ENCODE measurements at regions of chr12 and their contacts with region 1.

Region 1: GRCh38 chr12:11981121-11981733 is 89.5 kb upstream of the BCL2L14 start:
- DNase-seq: peak; percentile 60
- H3K4me3 Mint-ChIP-seq: peak overlapping the region; percentile 33
- H3K27ac Mint-ChIP-seq: peak overlapping the region; percentile 98
- H3K4me1 Mint-ChIP-seq: peaks cover 63% of the 10 kb centered on the region
- H3K27me3 Mint-ChIP-seq: no peaks in the 10 kb centered on the region

Region 2: GRCh38 chr12:11822081-11822834 is 159.0 kb before region 1 on chr12:
- intact Hi-C with region 1: no loop called
- DNase-seq: no peak
- H3K4me3 Mint-ChIP-seq: no peak overlapping the region
- H3K27ac Mint-ChIP-seq: peak overlapping the region; percentile 50
- H3K4me1 Mint-ChIP-seq: peaks cover 27% of the 10 kb centered on the region
- H3K27me3 Mint-ChIP-seq: no peaks in the 10 kb centered on the region

Region 3: GRCh38 chr12:11958221-11959091 is 22.8 kb before region 1 on chr12:
- intact Hi-C with region 1: loop called (anchors 1 kb)
- DNase-seq: peak; percentile 43
- H3K4me3 Mint-ChIP-seq: peak overlapping the region; percentile 13
- H3K27ac Mint-ChIP-seq: peak overlapping the region; percentile 93
- H3K4me1 Mint-ChIP-seq: peaks cover 51% of the 10 kb centered on the region
- H3K27me3 Mint-ChIP-seq: peaks cover 10% of the 10 kb centered on the region

Region 4: GRCh38 chr12:12070674-12071656 is 89.7 kb after region 1 on chr12 and contains the start of gene BCL2L14:
- intact Hi-C with region 1: no loop called
- DNase-seq: no peak
- H3K4me3 Mint-ChIP-seq: peak within 1 kb of the TSS; percentile 73
- H3K27ac Mint-ChIP-seq: peak within 1 kb of the TSS; percentile 87
- H3K4me1 Mint-ChIP-seq: peaks cover 11% of the 10 kb centered on the region
- H3K27me3 Mint-ChIP-seq: peaks cover 9% of the 10 kb centered on the region
- total RNA-seq, gene BCL2L14: 1.2 and 1.4 TPM in 2 replicates

Region 5: DNA sequence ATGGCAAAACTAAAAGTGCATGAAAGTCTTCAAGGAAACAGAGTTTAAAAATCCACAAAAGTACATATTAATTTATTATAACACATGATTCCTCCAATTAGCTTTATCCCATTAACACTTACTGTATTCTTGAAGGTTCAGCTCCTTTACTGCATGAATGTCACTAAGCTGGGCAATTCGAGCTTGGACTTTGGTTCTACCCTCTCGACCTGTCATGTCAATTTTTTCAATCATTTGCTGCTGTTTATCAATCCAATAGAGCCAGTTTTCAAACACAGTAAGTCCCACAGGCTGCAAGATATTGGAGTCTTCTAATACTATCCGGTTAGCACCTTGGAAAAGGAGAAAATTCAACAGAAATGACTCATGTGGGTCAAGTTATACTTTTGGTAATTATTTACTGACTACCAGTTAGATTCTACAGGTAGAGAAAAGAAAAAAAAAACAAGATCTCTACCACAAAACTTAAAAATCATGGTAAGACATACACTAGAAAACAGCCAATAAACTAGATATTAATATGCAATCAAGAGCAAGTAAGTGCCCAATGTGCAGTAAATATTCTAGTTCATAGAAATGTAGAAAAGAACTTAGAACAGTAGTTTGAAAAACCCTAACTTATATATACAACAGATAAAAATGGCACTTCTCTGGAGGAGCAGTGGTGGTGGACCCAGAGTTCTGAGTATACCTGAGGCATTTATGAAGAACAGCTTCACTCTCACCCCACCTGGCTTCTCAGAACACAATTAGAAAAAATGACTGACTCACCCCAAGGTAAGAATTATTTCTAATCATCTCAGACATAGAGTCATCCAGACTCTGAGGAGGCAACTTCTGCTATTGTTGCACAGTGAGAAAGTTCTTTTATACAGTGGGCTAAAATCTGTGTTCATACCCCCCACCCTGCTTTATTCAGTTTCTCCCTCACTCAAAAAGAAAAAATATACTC is 157.3 kb after region 1 on chr12:
- intact Hi-C with region 1: no loop called
- DNase-seq: no peak
- H3K4me3 Mint-ChIP-seq: no peak overlapping the region
- H3K27ac Mint-ChIP-seq: no peak overlapping the region
- H3K4me1 Mint-ChIP-seq: no peaks in the 10 kb centered on the region
- H3K27me3 Mint-ChIP-seq: peaks cover 28% of the 10 kb centered on the region

Measured in activated T-helper 2 cell treated with anti-CD3 and anti-CD28 coated beads, Interferon-gamma antibody, Interleukin-2, Interleukin-4, amounts not matched to agents 10 μg/mL and 5 μg/mL and 100 μg/mL, durations not matched to agents 14 hours and 24 hours and 36 hours (primary cell).